ENCODE measurements at regions of chr1 and their contacts with region 1.

Region 1: GRCh38 chr1:119795261-119796200 is 15.7 kb downstream of the REG4 start:
- DNase-seq: no peak
- H3K4me3 ChIP-seq: no peak overlapping the region
- H3K27ac ChIP-seq: no peak overlapping the region
- H3K4me1 ChIP-seq: no peaks in the 10 kb centered on the region; a peak in 1 of 4 replicates
- H3K27me3 ChIP-seq: no peaks in the 10 kb centered on the region
- CTCF ChIP-seq: no peak
- EP300 ChIP-seq: no peak
- RAD21 ChIP-seq: no peak

Region 2: GRCh38 chr1:119808972-119809550 is 13.5 kb after region 1 on chr1:
- CTCF ChIA-PET with region 1: interaction called, 17 read pairs
- POLR2A ChIA-PET with region 1: no interaction called
- DNase-seq: peak; percentile 74
- H3K4me3 ChIP-seq: no peak overlapping the region; a peak in 1 of 4 replicates
- H3K27ac ChIP-seq: no peak overlapping the region
- H3K4me1 ChIP-seq: peaks cover 0 to 2% of the 10 kb centered on the region in 2 experiments; a peak in 1 of 4 replicates
- H3K27me3 ChIP-seq: peaks cover 28% of the 10 kb centered on the region
- CTCF ChIP-seq: peak; percentile 97
- EP300 ChIP-seq: no peak
- RAD21 ChIP-seq: peak; percentile 85

Measured in SK-N-SH (cell line).